Calu3 (cell line): ENCODE measurements at regions of chr4 and their contacts with region 1.

Region 1: DNA sequence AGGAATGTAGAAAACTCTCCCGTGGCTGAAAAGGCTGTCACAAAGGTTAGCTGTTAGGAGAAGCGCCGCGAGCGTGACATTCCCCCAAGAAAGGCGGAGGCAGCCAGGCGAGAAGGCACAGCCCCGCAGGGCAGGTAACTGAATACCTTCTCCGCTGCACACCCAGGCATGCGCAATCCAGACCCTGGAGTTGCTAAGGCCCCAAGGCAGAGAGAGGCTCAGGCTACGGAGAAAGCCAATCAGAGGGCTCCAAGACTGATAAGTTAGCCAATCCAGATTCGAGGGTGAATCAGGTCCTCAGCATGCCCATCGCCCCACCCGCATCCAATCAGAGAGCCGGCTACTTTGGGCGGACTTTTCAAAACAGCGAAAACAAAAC is 485 bp upstream of the CCNG2 start:
- DNase-seq: peak; percentile 91
- H3K4me3 Mint-ChIP-seq: peak overlapping the region; percentile 82
- H3K27ac Mint-ChIP-seq: peak overlapping the region; percentile 95
- H3K4me1 Mint-ChIP-seq: peaks cover 12% of the 10 kb centered on the region
- H3K27me3 Mint-ChIP-seq: no peaks in the 10 kb centered on the region
- CTCF ChIP-seq: no peak

Region 2: GRCh38 chr4:76639292-76639691 is 517.2 kb before region 1 on chr4:
- CTCF ChIA-PET with region 1: interaction called, 11 read pairs
- intact Hi-C with region 1: no loop called
- DNase-seq: no peak
- H3K4me3 Mint-ChIP-seq: no peak overlapping the region
- H3K27ac Mint-ChIP-seq: no peak overlapping the region
- H3K4me1 Mint-ChIP-seq: peaks cover 32% of the 10 kb centered on the region
- H3K27me3 Mint-ChIP-seq: no peaks in the 10 kb centered on the region
- CTCF ChIP-seq: no peak

Region 3: GRCh38 chr4:77075869-77076799 is 80.4 kb before region 1 on chr4 and contains the start of gene CCNI:
- CTCF ChIA-PET with region 1: no interaction called
- intact Hi-C with region 1: loop called (anchors 2 kb)
- DNase-seq: peak; percentile 91
- H3K4me3 Mint-ChIP-seq: no peak within 1 kb of the TSS
- H3K27ac Mint-ChIP-seq: no peak within 1 kb of the TSS
- H3K4me1 Mint-ChIP-seq: peaks cover 8% of the 10 kb centered on the region
- H3K27me3 Mint-ChIP-seq: no peaks in the 10 kb centered on the region
- CTCF ChIP-seq: no peak
- total RNA-seq, gene CCNI: 102 and 136 TPM in 2 replicates

Region 4: DNA sequence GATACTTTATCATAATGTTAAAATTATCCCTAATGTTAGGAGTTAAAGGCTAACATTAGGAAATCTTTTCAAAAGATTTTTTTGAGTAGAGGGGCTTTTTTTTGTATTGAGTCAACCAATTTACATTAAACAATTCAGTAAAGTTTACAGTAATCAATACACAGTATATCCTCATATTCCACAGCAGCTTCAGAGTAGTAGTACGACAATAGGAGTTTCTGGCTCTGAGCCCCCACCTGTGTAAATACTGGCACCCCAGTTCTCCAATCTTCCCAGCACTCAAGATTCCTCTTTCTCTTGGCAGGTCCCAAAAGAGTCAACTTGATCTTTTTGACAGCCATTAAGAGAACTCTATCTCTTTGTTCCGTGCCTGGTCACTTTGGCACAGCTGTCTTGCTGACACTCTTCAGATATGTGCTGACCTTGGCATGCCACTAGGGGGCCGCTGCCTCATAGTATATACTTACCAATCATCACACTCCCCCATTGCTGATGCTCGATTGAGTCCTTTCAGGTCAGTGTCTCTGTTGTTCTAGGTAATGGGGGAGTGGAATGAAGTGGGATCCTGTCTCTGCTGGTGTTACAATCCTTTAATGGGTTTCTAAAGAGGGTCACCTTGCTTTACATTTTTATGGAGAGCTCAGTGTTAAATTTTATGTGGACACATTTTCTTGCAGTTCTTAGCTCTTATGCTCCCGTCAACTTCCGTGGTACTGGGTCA is 61.3 kb before region 1 on chr4:
- CTCF ChIA-PET with region 1: interaction called, 12 read pairs
- intact Hi-C with region 1: no loop called
- DNase-seq: peak; percentile 66
- H3K4me3 Mint-ChIP-seq: peak overlapping the region; percentile 7
- H3K27ac Mint-ChIP-seq: peak overlapping the region; percentile 20
- H3K4me1 Mint-ChIP-seq: peaks cover 23% of the 10 kb centered on the region
- H3K27me3 Mint-ChIP-seq: no peaks in the 10 kb centered on the region
- CTCF ChIP-seq: peak; percentile 55